Activated CD4-positive, alpha-beta memory T cell treated with anti-CD3 and anti-CD28 coated beads for 36 hours (primary cell): ENCODE measurements at regions of chr6 and their contacts with region 1.

Region 1: GRCh38 chr6:144215932-144216667 is 65.8 kb downstream of the STX11 start:
- DNase-seq: peak; percentile 95
- H3K4me3 Mint-ChIP-seq: peak overlapping the region; percentile 85
- H3K27ac Mint-ChIP-seq: peak overlapping the region; percentile 93
- H3K4me1 Mint-ChIP-seq: peaks cover 37% of the 10 kb centered on the region
- H3K27me3 Mint-ChIP-seq: peaks cover 4% of the 10 kb centered on the region

Region 2: GRCh38 chr6:143940011-143940597 is 276.0 kb before region 1 on chr6:
- CTCF ChIA-PET with region 1: interaction called, 11 read pairs
- POLR2A ChIA-PET with region 1: no interaction called
- intact Hi-C with region 1: loop called (anchors 1 kb)
- DNase-seq: peak; percentile 70
- H3K4me3 Mint-ChIP-seq: no peak overlapping the region
- H3K27ac Mint-ChIP-seq: no peak overlapping the region
- H3K4me1 Mint-ChIP-seq: peaks cover 2% of the 10 kb centered on the region
- H3K27me3 Mint-ChIP-seq: peaks cover 2% of the 10 kb centered on the region

Region 3: GRCh38 chr6:144095331-144096002 is 120.6 kb before region 1 on chr6 and contains the start of gene SF3B5:
- CTCF ChIA-PET with region 1: interaction called, 23 read pairs
- POLR2A ChIA-PET with region 1: interaction called, 3 read pairs
- intact Hi-C with region 1: loop called (anchors 1 kb)
- DNase-seq: peak; percentile 99
- H3K4me3 Mint-ChIP-seq: peak within 1 kb of the TSS; percentile 93
- H3K27ac Mint-ChIP-seq: peak within 1 kb of the TSS; percentile 96
- H3K4me1 Mint-ChIP-seq: peaks cover 25% of the 10 kb centered on the region
- H3K27me3 Mint-ChIP-seq: no peaks in the 10 kb centered on the region
- total RNA-seq, gene SF3B5: 162 to 171 TPM

Region 4: GRCh38 chr6:144131248-144131709 is 84.8 kb before region 1 on chr6:
- CTCF ChIA-PET with region 1: interaction called, 6 read pairs
- POLR2A ChIA-PET with region 1: no interaction called
- intact Hi-C with region 1: loop called (anchors 1 kb)
- DNase-seq: no peak
- H3K4me3 Mint-ChIP-seq: peak overlapping the region; percentile 59
- H3K27ac Mint-ChIP-seq: peak overlapping the region; percentile 74
- H3K4me1 Mint-ChIP-seq: peaks cover 31% of the 10 kb centered on the region
- H3K27me3 Mint-ChIP-seq: peaks cover 3% of the 10 kb centered on the region

Region 5: DNA sequence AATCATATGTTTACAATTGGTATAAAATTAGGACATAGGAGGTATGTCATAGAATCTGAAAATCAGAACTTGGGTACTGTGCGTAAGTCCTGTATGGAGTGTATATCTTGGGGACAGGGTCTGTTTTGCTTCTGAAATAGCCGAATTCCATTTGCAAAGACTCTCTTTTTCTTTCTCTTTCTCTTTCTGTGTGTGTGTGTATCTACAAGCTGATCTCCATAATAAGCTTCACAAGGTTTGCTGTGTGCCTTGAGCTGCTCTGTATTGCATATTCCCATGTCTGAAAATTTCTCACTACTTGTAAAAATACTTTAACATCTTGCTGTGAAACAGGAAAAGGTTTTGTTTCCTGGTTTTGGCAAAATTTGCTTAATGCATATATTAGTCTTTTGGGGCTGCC is 36.3 kb before region 1 on chr6:
- CTCF ChIA-PET with region 1: interaction called, 6 read pairs
- POLR2A ChIA-PET with region 1: interaction called, 3 read pairs
- intact Hi-C with region 1: loop called (anchors 2 kb)
- DNase-seq: no peak
- H3K4me3 Mint-ChIP-seq: no peak overlapping the region
- H3K27ac Mint-ChIP-seq: no peak overlapping the region
- H3K4me1 Mint-ChIP-seq: peaks cover 52% of the 10 kb centered on the region
- H3K27me3 Mint-ChIP-seq: no peaks in the 10 kb centered on the region

Region 6: DNA sequence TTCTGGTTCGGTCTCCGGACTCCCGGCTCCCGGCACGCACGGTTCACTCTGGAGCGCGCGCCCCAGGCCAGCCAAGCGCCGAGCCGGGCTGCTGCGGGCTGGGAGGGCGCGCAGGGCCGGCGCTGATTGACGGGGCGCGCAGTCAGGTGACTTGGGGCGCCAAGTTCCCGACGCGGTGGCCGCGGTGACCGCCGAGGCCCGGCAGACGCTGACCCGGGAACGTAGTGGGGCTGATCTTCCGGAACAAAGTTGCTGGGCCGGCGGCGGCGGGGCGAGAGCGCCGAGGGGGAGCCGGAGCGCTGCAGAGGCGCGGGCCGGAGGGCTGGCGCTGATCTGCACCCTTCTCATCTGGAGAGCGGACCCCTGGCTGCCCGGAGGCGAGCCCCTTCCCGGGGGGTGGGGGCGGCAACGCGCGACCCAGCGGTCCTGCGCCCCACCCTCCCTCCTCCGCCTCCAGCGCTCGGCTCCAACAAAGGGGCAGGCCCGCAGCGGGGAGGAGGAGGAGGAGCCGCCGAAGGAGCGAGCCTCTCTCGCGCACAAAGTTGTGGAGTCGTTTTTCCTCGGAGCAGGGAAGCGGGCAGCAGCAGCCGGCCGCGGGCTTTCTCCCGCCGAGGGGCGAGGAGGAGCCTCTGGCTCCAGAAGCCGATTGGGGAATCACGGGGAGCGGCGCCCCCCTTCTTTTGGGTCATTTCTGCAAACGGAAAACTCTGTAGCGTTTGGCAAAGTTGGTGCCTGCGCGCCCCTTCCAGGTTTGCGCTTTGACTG is 68.9 kb after region 1 on chr6 and contains the start of gene UTRN:
- CTCF ChIA-PET with region 1: interaction called, 6 read pairs
- POLR2A ChIA-PET with region 1: no interaction called
- intact Hi-C with region 1: loop called (anchors 2 kb)
- DNase-seq: peak; percentile 61
- H3K4me3 Mint-ChIP-seq: peak within 1 kb of the TSS; percentile 90
- H3K27ac Mint-ChIP-seq: peak within 1 kb of the TSS; percentile 73
- H3K4me1 Mint-ChIP-seq: peaks cover 16% of the 10 kb centered on the region
- H3K27me3 Mint-ChIP-seq: peaks cover 10% of the 10 kb centered on the region
- total RNA-seq, gene UTRN: 37.8 to 38.1 TPM